Colonic mucosa (tissue), 4 donors: ENCODE measurements at regions of chr3 and their contacts with region 1.

Region 1: DNA sequence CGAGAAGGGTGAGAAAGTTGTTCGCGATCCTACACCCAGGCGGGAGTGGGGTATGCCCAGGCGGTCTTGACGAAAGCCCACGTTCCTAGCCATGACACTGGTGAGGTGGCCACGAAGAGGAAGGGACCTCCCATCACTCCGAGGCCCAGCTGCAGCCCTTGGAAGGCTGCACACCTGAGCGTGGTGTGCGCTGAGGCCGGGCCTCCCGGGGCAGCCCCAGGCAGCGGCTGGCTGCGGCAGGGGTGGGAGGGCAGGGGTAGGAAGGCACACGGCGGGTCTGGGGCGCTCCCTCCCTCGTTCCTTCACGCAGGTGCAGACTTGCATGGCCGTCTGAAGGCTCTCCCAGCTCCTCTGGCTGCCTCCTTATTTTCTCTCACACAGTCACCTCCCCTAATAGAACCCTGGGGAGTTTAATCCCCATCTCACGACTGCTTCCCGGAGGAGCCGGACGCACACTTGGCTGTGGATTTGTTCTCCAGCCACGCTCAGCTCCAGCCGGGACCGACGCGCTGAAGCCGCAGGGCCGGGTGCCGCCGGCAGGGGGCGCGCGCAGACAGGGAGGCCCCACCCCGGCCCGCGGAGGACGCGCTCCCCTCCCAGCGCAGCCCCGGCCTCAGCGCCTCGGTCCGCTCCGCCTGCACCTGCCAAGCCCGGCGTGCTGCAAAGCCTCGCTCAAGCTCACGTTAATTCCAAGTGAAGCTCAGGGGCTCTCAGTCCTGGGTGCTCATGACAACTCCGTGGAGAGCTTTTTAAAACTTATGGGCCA is 37.8 kb upstream of the MUC4 start:
- DNase-seq: no peak
- H3K4me3 ChIP-seq: no peak overlapping the region
- H3K27ac ChIP-seq: peak overlapping the region; percentile 19
- H3K4me1 ChIP-seq: no peaks in the 10 kb centered on the region
- H3K27me3 ChIP-seq: no peaks in the 10 kb centered on the region
- CTCF ChIP-seq: peak; percentile 80

Region 2: GRCh38 chr3:195727606-195728195 is 121.8 kb before region 1 on chr3:
- intact Hi-C with region 1: no loop called
- DNase-seq: no peak
- H3K4me3 ChIP-seq: no peak overlapping the region
- H3K27ac ChIP-seq: peak overlapping the region; percentile 81
- H3K4me1 ChIP-seq: peaks cover 10% of the 10 kb centered on the region
- H3K27me3 ChIP-seq: no peaks in the 10 kb centered on the region
- CTCF ChIP-seq: no peak

Region 3: DNA sequence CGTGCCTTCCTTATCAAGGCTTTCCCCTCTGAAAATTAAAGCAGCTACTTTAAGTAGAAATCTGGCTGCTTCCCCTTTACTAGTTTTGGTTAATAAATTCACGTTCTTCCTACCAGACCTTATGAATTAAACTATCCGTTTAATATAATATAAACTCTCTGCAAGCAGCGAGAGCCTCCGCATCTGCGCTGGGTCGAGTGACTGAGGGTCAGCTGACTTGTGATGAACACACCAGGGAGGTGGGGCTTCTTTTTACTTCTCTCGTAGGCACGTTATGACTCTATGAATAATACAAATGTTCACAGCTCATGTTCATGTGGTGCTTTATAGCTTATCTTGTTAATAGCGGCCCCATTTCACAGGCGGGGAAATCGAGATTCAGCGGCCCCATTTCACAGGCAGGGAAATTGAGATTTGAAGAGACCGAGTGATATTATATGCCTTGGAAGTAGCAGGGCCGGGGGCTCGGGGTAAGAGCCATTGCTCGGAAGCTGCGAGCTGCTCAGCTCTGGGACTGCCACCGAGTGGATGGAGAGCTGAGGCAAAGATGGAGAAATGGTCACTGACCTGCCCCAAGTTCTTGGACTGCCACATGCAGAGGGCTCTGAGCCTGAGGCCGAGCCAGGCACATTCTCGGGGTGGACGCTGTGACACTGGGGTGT is 46.1 kb before region 1 on chr3:
- intact Hi-C with region 1: loop called (anchors 5 kb)
- DNase-seq: peak; percentile 32
- H3K4me3 ChIP-seq: no peak overlapping the region
- H3K27ac ChIP-seq: peak overlapping the region; percentile 76
- H3K4me1 ChIP-seq: peaks cover 24% of the 10 kb centered on the region
- H3K27me3 ChIP-seq: no peaks in the 10 kb centered on the region
- CTCF ChIP-seq: no peak